ENCODE measurements at regions of chrX and their contacts with region 1.

Region 1: DNA sequence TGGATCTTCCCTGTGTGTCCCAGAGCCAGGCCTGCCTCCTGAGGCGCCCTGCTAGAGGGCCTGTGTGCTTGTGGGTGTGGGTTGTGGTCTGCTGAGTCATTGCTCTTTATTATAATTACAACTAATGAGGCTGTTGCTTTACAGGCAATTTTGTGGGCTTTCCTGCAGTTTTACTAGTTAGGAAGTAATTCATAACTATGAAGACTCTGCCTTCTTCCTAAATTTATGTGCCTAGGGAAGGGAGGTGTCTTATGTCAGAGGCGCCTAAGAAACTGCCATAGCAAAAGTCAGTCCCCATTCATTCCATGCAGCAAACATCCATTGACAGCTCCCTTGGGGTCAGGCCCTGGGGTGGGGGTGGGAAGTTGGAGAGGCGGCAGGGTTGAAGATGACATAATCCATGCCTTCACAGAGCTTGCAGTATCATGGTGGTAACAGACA is 359.2 kb downstream of the IDS start:
- DNase-seq: no peak
- ATAC-seq: no peak
- H3K4me3 ChIP-seq: no peak overlapping the region
- H3K27ac ChIP-seq: no peak overlapping the region
- H3K4me1 ChIP-seq: no peaks in the 10 kb centered on the region
- H3K27me3 ChIP-seq: no peaks in the 10 kb centered on the region
- CTCF ChIP-seq: no peak

Region 2: GRCh38 chrX:149512225-149512885 is 366.5 kb after region 1 on chrX:
- CTCF ChIA-PET with region 1: no interaction called
- POLR2A ChIA-PET with region 1: interaction called, 10 read pairs
- in situ Hi-C with region 1: no loop called
- intact Hi-C with region 1: no loop called
- DNase-seq: no peak
- ATAC-seq: peak; percentile 85
- H3K4me3 ChIP-seq: no peak overlapping the region
- H3K27ac ChIP-seq: no peak overlapping the region
- H3K4me1 ChIP-seq: no peaks in the 10 kb centered on the region
- H3K27me3 ChIP-seq: no peaks in the 10 kb centered on the region
- CTCF ChIP-seq: peak; percentile 82